ENCODE measurements at regions of chr6 and their contacts with region 1.

Region 1: GRCh38 chr6:35552285-35552917 is 39.7 kb upstream of the TULP1 start:
- DNase-seq: peak in 4 of 5 donors; percentile 56 to 62 (median 60)
- H3K4me3 ChIP-seq: no peak overlapping the region
- H3K4me3 Mint-ChIP-seq: no peak overlapping the region
- H3K27ac ChIP-seq: no peak overlapping the region
- H3K27ac Mint-ChIP-seq: no peak overlapping the region
- H3K4me1 ChIP-seq: no peaks in the 10 kb centered on the region
- H3K4me1 Mint-ChIP-seq: peaks cover 0 to 5% (median 3%) of the 10 kb centered on the region in 4 donors
- H3K27me3 ChIP-seq: no peaks in the 10 kb centered on the region
- H3K27me3 Mint-ChIP-seq: peaks cover 2% of the 10 kb centered on the region in 2 donors

Region 2: GRCh38 chr6:35342258-35343091 is 209.9 kb before region 1 on chr6 and contains the start of gene PPARD:
- CTCF ChIA-PET with region 1: interaction called, 5 read pairs
- POLR2A ChIA-PET with region 1: no interaction called
- intact Hi-C with region 1: loop called (anchors 5 kb)
- DNase-seq: peak; percentile 94 to 98 (median 95)
- H3K4me3 ChIP-seq: peak within 1 kb of the TSS; percentile 50 to 97
- H3K4me3 Mint-ChIP-seq: peak within 1 kb of the TSS; percentile 87 to 99 (median 96)
- H3K27ac ChIP-seq: peak within 1 kb of the TSS; percentile 86
- H3K27ac Mint-ChIP-seq: peak within 1 kb of the TSS; percentile 87 to 99 (median 96)
- H3K4me1 ChIP-seq: peaks cover 52% of the 10 kb centered on the region
- H3K4me1 Mint-ChIP-seq: peaks cover 37 to 60% (median 51%) of the 10 kb centered on the region in 4 donors
- H3K27me3 ChIP-seq: no peaks in the 10 kb centered on the region
- H3K27me3 Mint-ChIP-seq: no peaks in the 10 kb centered on the region
- total RNA-seq, gene PPARD: 37.2 to 38.7 TPM

Region 3: DNA sequence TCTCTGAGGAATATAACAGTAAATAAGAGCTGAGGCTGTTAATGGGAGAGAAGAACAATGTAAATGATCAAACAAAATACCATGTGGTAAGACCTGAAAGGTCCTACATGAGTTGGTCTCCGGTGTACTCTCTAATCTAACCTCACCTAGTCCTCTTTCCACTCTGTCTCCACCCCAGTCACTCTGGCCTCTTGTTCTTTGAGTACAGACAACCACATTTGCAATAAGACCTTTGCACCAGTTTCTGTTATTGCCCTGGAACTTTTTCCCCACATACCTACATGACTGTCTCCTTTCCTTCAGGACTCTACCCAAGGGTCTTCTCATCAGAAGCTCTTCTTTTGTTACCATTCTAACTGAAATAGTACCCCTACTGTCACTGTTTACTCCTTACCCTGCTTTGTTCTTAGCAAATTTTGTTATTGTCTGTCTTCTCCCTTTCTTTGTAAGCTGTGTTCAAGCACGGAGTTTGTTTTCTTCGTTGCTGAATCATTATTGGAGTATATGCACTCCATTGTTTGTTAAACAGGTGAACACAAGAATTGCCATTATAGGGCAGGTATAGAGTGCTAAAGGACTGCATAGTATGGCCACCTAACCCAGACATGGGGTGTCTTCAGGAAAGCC is 512.5 kb after region 1 on chr6:
- CTCF ChIA-PET with region 1: no interaction called
- POLR2A ChIA-PET with region 1: no interaction called
- intact Hi-C with region 1: no loop called
- DNase-seq: no peak
- H3K4me3 ChIP-seq: no peak overlapping the region
- H3K4me3 Mint-ChIP-seq: no peak overlapping the region
- H3K27ac ChIP-seq: no peak overlapping the region
- H3K27ac Mint-ChIP-seq: peak overlapping the region in 6 of 7 donors; percentile 3 to 87 (median 79)
- H3K4me1 ChIP-seq: peaks cover 36% of the 10 kb centered on the region
- H3K4me1 Mint-ChIP-seq: peaks cover 47 to 83% (median 65%) of the 10 kb centered on the region in 4 donors
- H3K27me3 ChIP-seq: no peaks in the 10 kb centered on the region
- H3K27me3 Mint-ChIP-seq: no peaks in the 10 kb centered on the region